ENCODE measurements at regions of chr16 and their contacts with region 1.

Region 1: DNA sequence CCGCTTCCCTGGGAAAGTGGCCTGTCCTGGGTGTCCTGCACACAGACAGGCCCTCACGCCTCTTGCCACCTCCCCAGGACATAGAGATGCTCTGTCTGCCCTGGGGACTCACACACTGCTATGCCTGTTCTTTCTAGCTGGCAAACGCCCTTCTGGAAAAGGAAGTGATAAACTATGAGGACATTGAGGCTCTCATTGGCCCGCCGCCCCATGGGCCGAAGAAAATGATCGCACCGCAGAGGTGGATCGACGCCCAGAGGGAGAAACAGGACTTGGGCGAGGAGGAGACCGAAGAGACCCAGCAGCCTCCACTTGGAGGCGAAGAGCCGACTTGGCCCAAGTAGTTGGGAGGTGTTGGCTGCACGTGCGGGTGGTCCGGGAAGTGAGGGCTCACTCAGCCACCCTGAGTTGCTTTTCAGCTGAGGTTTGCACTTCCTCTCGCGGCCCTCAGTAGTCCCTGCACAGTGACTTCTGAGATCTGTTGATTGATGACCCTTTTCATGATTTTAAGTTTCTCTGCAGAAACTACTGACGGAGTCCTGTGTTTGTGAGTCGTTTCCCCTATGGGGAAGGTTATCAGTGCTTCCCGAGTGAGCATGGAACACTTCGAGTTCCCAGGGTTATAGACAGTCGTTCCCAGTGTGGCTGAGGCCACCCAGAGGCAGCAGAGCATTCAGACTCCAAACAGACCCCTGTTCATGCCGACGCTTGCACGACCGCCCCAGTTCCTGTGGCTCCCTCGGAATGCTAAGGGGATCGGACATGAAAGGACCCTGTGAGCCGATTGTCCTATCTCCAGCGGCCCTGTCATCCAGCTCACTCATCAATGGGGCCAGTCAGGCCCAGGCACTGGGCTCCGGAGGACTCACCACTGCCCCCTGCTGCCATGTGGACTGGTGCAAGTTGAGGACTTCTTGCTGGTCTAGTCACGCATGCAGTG is 3.5 kb upstream of the RPL13 start:
- DNase-seq: peak; percentile 76 to 87 (median 82)
- H3K4me3 ChIP-seq: no peak overlapping the region
- H3K27ac ChIP-seq: peak overlapping the region in 1 of 2 experiments; percentile 9
- H3K4me1 ChIP-seq: peaks cover 0 to 33% (median 26%) of the 10 kb centered on the region in 4 experiments
- H3K27me3 ChIP-seq: no peaks in the 10 kb centered on the region

Region 2: GRCh38 chr16:89334988-89335802 is 221.8 kb before region 1 on chr16:
- CTCF ChIA-PET with region 1: interaction called, 12 read pairs
- POLR2A ChIA-PET with region 1: no interaction called
- DNase-seq: no peak
- H3K4me3 ChIP-seq: no peak overlapping the region
- H3K27ac ChIP-seq: no peak overlapping the region
- H3K4me1 ChIP-seq: peaks cover 0 to 50% (median 34%) of the 10 kb centered on the region in 4 experiments
- H3K27me3 ChIP-seq: no peaks in the 10 kb centered on the region

Region 3: GRCh38 chr16:89540557-89540956 is 16.5 kb before region 1 on chr16:
- CTCF ChIA-PET with region 1: interaction called, 12 read pairs
- POLR2A ChIA-PET with region 1: interaction called, 3 read pairs
- DNase-seq: no peak
- H3K4me3 ChIP-seq: no peak overlapping the region
- H3K27ac ChIP-seq: no peak overlapping the region
- H3K4me1 ChIP-seq: peaks cover 0 to 2% (median 1%) of the 10 kb centered on the region in 4 experiments
- H3K27me3 ChIP-seq: no peaks in the 10 kb centered on the region